PC-3 (cell line): ENCODE measurements at regions of chr20 and their contacts with region 1.

Region 1: GRCh38 chr20:62603021-62603906 is 39.0 kb upstream of the SLCO4A1 start:
- DNase-seq: peak; percentile 98
- ATAC-seq: peak; percentile 76
- H3K4me3 ChIP-seq: peak overlapping the region; percentile 65
- H3K27ac ChIP-seq: peak overlapping the region; percentile 98
- H3K4me1 ChIP-seq: peaks cover 75% of the 10 kb centered on the region
- H3K27me3 ChIP-seq: no peaks in the 10 kb centered on the region
- CTCF ChIP-seq: no peak

Region 2: GRCh38 chr20:62590301-62591121 is 12.8 kb before region 1 on chr20:
- CTCF ChIA-PET with region 1: interaction called, 3 read pairs
- POLR2A ChIA-PET with region 1: interaction called, 4 read pairs
- intact Hi-C with region 1: loop called (anchors 1 kb)
- DNase-seq: peak; percentile 94
- ATAC-seq: peak; percentile 88
- H3K4me3 ChIP-seq: no peak overlapping the region
- H3K27ac ChIP-seq: peak overlapping the region; percentile 85
- H3K4me1 ChIP-seq: peaks cover 39% of the 10 kb centered on the region
- H3K27me3 ChIP-seq: no peaks in the 10 kb centered on the region
- CTCF ChIP-seq: no peak

Region 3: GRCh38 chr20:62623488-62624324 is 20.4 kb after region 1 on chr20:
- CTCF ChIA-PET with region 1: interaction called, 4 read pairs
- POLR2A ChIA-PET with region 1: interaction called, 7 read pairs
- intact Hi-C with region 1: loop called (anchors 1 kb)
- DNase-seq: peak; percentile 98
- ATAC-seq: peak; percentile 63
- H3K4me3 ChIP-seq: peak overlapping the region; percentile 45; the same call in 1 of the 2 replicates
- H3K27ac ChIP-seq: peak overlapping the region; percentile 98
- H3K4me1 ChIP-seq: peaks cover 60% of the 10 kb centered on the region
- H3K27me3 ChIP-seq: no peaks in the 10 kb centered on the region
- CTCF ChIP-seq: no peak